ENCODE measurements at regions of chr14 and their contacts with region 1.

Region 1: DNA sequence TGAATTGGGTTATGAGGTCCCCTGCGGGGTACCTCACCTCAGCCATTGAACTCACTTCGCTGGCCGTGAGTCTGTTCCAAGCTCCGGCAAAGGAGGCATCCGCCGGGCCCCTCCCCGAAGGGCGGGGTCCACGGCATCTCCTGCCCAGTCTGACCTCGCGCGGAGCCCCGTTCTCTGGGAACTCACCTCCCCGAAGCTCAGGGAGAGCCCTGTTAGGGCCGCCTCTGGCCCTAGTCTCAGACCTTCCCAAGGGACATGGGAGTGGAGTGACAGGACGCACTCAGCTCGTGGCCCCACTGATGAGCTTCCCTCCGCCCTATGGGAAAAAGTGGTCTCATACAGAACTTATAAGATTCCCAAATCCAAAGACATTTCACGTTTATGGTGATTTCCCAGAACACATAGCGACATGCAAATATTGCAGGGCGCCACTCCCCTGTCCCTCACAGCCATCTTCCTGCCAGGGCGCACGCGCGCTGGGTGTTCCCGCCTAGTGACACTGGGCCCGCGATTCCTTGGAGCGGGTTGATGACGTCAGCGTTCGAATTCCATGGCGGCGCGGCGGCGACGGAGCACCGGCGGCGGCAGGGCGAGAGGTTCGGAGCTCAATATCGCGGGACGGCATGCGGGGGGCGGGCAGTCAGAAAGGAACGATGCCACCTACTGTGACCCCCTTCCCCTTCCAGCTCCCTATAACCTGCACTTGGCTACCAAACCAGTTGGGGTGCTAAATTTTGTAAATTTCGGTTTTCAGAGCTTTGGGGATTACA is at the start of gene PARP2:
- DNase-seq: peak; percentile 99
- ATAC-seq: peak; percentile 96
- H3K4me3 ChIP-seq: peak within 1 kb of the TSS; percentile 81
- H3K27ac ChIP-seq: peak within 1 kb of the TSS; percentile 89
- H3K4me1 ChIP-seq: no peaks in the 10 kb centered on the region
- H3K27me3 ChIP-seq: no peaks in the 10 kb centered on the region
- CTCF ChIP-seq: no peak
- EP300 ChIP-seq: no peak
- POLR2A ChIP-seq: peak; percentile 97
- RAD21 ChIP-seq: no peak
- polyA plus RNA-seq, gene PARP2: 30.4 to 38.0 TPM

Region 2: DNA sequence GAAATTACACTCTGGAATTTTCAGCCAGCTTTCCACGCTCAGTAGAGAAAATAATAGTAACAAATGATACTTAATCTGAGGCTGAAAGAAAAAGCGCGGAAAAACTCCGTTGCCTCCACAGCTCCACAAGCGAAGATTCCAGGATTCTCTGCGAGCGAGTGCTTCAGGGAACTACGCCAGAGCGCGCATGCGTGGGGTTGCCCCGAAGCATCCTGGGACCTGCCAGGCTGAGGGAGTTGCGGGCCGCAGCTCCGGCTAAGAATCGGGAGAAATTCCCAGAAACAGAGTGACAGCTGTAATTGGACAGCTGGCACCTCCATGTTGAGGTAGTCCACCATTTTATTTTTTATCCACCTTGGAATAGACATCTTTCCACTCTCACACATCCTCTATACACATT is 25.6 kb before region 1 on chr14:
- CTCF ChIA-PET with region 1: no interaction called
- POLR2A ChIA-PET with region 1: no interaction called
- RAD21 ChIA-PET with region 1: no interaction called
- SMC1A ChIA-PET with region 1: no interaction called
- in situ Hi-C with region 1: no loop called
- intact Hi-C with region 1: no loop called
- DNase-seq: no peak
- ATAC-seq: no peak
- H3K4me3 ChIP-seq: no peak overlapping the region
- H3K27ac ChIP-seq: no peak overlapping the region
- H3K4me1 ChIP-seq: no peaks in the 10 kb centered on the region
- H3K27me3 ChIP-seq: no peaks in the 10 kb centered on the region
- CTCF ChIP-seq: no peak
- EP300 ChIP-seq: no peak
- POLR2A ChIP-seq: no peak
- RAD21 ChIP-seq: no peak

Region 3: DNA sequence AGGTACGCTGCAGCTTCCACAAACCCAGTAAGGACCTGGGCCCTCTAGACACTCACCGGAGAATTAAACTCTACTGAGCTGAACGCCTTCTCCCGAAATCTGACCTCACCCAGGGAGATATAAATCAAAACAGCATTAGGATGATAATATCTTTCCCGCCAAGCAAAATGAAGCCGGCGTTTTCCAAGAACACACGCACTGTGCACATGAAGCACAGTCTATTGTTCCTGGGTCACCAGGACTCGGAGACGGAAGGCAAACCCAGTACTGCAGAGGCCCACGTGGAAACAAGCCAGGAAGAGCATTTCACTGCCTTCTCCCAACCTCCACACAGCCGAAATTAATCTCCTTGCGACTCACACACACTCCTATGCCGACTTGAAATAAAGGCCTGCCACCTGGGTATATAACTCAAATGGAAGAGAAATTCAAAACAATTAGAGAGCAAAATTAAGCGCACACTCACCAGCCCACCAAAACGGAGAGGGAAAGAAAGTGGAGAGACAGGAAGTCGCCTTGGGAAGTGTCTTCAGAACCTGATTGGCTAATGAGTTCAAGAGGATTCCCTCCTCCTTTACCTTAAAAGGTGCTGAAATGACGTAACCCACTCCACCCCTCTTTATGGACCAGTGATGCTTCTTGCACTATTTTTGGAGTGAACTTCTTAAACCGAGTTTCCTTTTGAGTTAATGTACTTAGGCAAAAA is 10.3 kb before region 1 on chr14 and contains the start of gene CCNB1IP1:
- CTCF ChIA-PET with region 1: interaction called, 62 read pairs
- POLR2A ChIA-PET with region 1: interaction called, 96 read pairs
- RAD21 ChIA-PET with region 1: interaction called, 55 read pairs
- SMC1A ChIA-PET with region 1: interaction called, 65 read pairs
- in situ Hi-C with region 1: no loop called
- intact Hi-C with region 1: no loop called
- DNase-seq: peak; percentile 87
- ATAC-seq: peak; percentile 95
- H3K4me3 ChIP-seq: peak within 1 kb of the TSS; percentile 82
- H3K27ac ChIP-seq: peak within 1 kb of the TSS; percentile 85
- H3K4me1 ChIP-seq: peaks cover 6% of the 10 kb centered on the region; the same call in 1 of the 2 replicates
- H3K27me3 ChIP-seq: no peaks in the 10 kb centered on the region
- CTCF ChIP-seq: no peak
- EP300 ChIP-seq: no peak; a peak in 1 of 4 replicates
- POLR2A ChIP-seq: peak; percentile 56; the same call in 1 of the 2 replicates
- RAD21 ChIP-seq: no peak
- polyA plus RNA-seq, gene CCNB1IP1: 69.2 to 80.6 TPM

Region 4: DNA sequence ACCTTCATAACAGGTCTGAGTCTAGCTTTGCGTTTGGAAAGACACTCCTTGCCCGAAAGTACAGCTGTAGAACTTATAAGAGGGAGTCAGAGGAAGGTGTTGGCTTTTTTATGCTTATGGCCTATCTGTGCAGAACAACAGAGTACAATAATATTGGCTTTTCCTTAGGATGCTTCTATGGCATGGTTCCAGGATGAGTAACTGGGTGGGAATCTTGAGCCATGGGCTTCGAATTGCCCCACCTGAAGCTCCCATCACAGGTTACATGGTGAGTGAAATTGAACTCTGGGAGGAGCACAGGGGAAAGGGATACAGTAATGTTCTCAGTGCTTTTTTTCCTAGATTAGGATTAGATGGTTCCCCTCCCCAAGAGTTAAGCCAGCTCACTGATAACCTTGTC is 13.1 kb after region 1 on chr14:
- CTCF ChIA-PET with region 1: interaction called, 14 read pairs
- POLR2A ChIA-PET with region 1: interaction called, 5 read pairs
- RAD21 ChIA-PET with region 1: interaction called, 3 read pairs
- SMC1A ChIA-PET with region 1: interaction called, 12 read pairs
- in situ Hi-C with region 1: no loop called
- intact Hi-C with region 1: no loop called
- DNase-seq: no peak
- ATAC-seq: no peak
- H3K4me3 ChIP-seq: no peak overlapping the region
- H3K27ac ChIP-seq: no peak overlapping the region
- H3K4me1 ChIP-seq: no peaks in the 10 kb centered on the region
- H3K27me3 ChIP-seq: no peaks in the 10 kb centered on the region
- CTCF ChIP-seq: no peak
- EP300 ChIP-seq: no peak
- POLR2A ChIP-seq: no peak
- RAD21 ChIP-seq: no peak

Region 5: DNA sequence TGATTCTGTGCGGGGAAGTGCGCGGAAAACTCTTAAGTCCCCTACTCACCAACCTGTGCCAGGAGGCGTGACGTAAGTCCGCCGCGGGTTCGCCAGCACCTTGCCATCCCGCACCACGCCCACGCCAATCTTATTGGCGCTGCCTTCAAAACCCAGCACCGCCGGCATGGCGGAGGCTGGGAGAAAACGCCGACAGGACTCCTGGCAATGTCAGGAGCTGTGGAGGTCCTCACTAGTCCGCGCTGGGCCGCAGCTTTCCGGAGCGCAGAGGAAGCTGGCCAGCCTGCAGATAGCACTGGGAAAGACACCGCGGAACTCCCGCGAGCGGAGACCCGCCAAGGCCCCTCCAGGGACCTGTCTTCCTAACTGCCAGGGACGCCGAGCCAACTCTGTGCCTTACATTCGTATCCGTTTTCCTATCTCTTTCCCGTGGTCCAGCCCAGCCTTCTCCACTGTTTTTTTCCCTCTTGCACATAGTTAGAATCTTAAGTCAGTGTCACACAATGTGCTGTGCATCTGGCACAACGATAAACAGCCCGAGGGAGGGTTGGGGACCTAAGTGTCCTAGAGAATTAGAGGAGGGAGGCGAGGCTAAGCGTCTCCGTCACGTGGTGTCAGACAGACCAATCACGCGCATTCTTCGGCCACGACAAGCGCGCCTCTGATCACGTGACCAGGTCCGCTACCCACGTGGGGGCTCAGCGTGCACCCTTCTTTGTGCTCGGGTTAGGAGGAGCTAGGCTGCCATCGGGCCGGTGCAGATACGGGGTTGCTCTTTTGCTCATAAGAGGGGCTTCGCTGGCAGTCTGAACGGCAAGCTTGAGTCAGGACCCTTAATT is 111.5 kb after region 1 on chr14 and contains the starts of genes APEX1 and OSGEP:
- CTCF ChIA-PET with region 1: no interaction called
- POLR2A ChIA-PET with region 1: interaction called, 16 read pairs
- RAD21 ChIA-PET with region 1: interaction called, 9 read pairs
- SMC1A ChIA-PET with region 1: interaction called, 6 read pairs
- in situ Hi-C with region 1: no loop called
- intact Hi-C with region 1: loop called (anchors 1 kb)
- DNase-seq: peak; percentile 99
- ATAC-seq: peak; percentile 93
- H3K4me3 ChIP-seq: peak within 1 kb of the TSS; percentile 83
- H3K27ac ChIP-seq: peak within 1 kb of the TSS; percentile 98
- H3K4me1 ChIP-seq: peaks cover under 1% of the 10 kb centered on the region
- H3K27me3 ChIP-seq: no peaks in the 10 kb centered on the region
- CTCF ChIP-seq: no peak
- EP300 ChIP-seq: peak in 1 of 2 experiments; percentile 63; a peak in 2 of 4 replicates
- POLR2A ChIP-seq: peak; percentile 93
- RAD21 ChIP-seq: no peak
- polyA plus RNA-seq, gene APEX1: 299 to 320 TPM
- polyA plus RNA-seq, gene OSGEP: 48.9 to 49.4 TPM

Region 6: DNA sequence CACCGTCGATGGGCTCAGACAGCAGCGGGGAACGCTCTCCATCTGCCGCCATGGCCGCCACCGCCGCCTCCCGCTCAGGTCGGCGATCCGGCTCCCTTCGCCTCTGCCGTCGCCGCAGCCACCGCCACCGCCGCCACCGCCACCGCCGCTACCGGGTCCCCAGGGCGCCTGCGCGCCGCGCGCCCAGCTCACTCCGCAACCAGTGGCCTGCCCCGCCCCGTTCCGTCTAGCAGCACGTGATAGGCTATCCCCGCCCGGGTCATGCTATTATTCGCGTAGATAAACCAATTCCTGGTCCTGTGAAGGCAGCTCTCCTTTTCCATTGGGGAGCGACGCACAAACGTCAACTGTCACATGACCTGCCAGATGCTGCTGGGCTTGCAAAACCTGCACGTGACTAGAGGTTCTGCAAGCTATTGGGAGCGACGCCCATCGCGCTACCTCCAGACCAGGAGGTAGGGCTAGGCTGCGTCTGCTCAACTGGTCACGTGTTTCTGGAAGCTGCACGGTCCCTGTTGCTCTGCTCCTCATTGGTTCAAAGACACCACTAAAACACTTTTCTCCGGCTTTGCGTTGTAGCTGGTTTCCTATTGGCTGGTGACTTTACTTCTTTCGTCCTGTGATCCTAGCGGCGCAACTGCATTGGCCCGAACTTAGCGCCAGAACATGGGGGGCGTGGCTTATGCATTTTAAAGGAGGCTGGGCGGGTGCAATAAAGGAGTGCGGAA is 118.2 kb after region 1 on chr14 and contains the start of gene PIP4P1:
- CTCF ChIA-PET with region 1: interaction called, 3 read pairs
- POLR2A ChIA-PET with region 1: interaction called, 16 read pairs
- RAD21 ChIA-PET with region 1: interaction called, 9 read pairs
- SMC1A ChIA-PET with region 1: interaction called, 9 read pairs
- in situ Hi-C with region 1: no loop called
- intact Hi-C with region 1: loop called (anchors 1 kb)
- DNase-seq: peak; percentile 100
- ATAC-seq: peak; percentile 96
- H3K4me3 ChIP-seq: peak within 1 kb of the TSS; percentile 73
- H3K27ac ChIP-seq: peak within 1 kb of the TSS; percentile 87
- H3K4me1 ChIP-seq: peaks cover 6% of the 10 kb centered on the region
- H3K27me3 ChIP-seq: no peaks in the 10 kb centered on the region
- CTCF ChIP-seq: no peak
- EP300 ChIP-seq: no peak
- POLR2A ChIP-seq: peak; percentile 78
- RAD21 ChIP-seq: no peak
- polyA plus RNA-seq, gene PIP4P1: 19.1 to 41.6 TPM

Region 7: GRCh38 chr14:20662968-20663732 is 319.9 kb after region 1 on chr14:
- CTCF ChIA-PET with region 1: interaction called, 3 read pairs
- POLR2A ChIA-PET with region 1: no interaction called
- RAD21 ChIA-PET with region 1: interaction called, 3 read pairs
- SMC1A ChIA-PET with region 1: no interaction called
- in situ Hi-C with region 1: no loop called
- intact Hi-C with region 1: loop called (anchors 5 kb)
- DNase-seq: peak; percentile 88
- ATAC-seq: peak; percentile 73
- H3K4me3 ChIP-seq: peak overlapping the region; percentile 83
- H3K27ac ChIP-seq: peak overlapping the region; percentile 20; the same call in 1 of the 2 replicates
- H3K4me1 ChIP-seq: peaks cover 20% of the 10 kb centered on the region
- H3K27me3 ChIP-seq: no peaks in the 10 kb centered on the region
- CTCF ChIP-seq: peak; percentile 72 to 84 (median 77)
- EP300 ChIP-seq: peak in 1 of 2 experiments; percentile 45; a peak in 1 of 4 replicates
- POLR2A ChIP-seq: 0 out of 2 replicates have a peak, but pooled peaks have one; percentile 32
- RAD21 ChIP-seq: peak; percentile 75